ENCODE measurements at regions of chr9 and their contacts with region 1.

Region 1: GRCh38 chr9:34500623-34501267 is 22.0 kb downstream of the ENHO start:
- DNase-seq: no peak
- H3K4me3 ChIP-seq: no peak overlapping the region
- H3K27me3 ChIP-seq: peaks cover 6% of the 10 kb centered on the region
- CTCF ChIP-seq: peak; percentile 99

Region 2: GRCh38 chr9:34163458-34163857 is 337.3 kb before region 1 on chr9:
- CTCF ChIA-PET with region 1: no interaction called
- POLR2A ChIA-PET with region 1: no interaction called
- DNase-seq: no peak
- H3K4me3 ChIP-seq: no peak overlapping the region
- H3K27me3 ChIP-seq: no peaks in the 10 kb centered on the region
- CTCF ChIP-seq: no peak

Region 3: GRCh38 chr9:34430843-34431437 is 69.8 kb before region 1 on chr9:
- CTCF ChIA-PET with region 1: interaction called, 34 read pairs
- POLR2A ChIA-PET with region 1: no interaction called
- DNase-seq: no peak
- H3K4me3 ChIP-seq: no peak overlapping the region
- H3K27me3 ChIP-seq: no peaks in the 10 kb centered on the region
- CTCF ChIP-seq: no peak

Region 4: DNA sequence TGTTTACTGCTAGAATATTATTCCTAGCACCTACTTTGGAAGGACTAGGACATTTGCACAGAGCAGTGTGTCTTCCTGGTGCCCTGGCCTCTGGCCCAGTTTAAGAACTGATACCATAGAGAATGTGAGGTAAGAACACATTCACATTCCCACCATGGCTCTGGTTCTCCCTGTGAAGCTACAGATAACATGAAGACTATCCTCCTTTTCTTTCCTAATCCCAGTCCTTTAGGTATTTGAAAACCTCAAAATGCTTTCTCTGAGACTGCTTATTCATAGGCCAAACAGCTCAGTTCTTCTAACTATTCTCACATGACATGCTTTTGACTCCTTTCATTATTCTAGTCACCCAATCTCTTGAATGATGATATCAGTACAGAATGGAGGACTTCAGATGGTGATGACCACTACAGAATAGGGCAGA is 54.3 kb before region 1 on chr9:
- CTCF ChIA-PET with region 1: interaction called, 37 read pairs
- POLR2A ChIA-PET with region 1: no interaction called
- DNase-seq: no peak
- H3K4me3 ChIP-seq: no peak overlapping the region
- H3K27me3 ChIP-seq: no peaks in the 10 kb centered on the region
- CTCF ChIP-seq: no peak

Region 5: GRCh38 chr9:34513567-34514214 is 12.9 kb after region 1 on chr9:
- CTCF ChIA-PET with region 1: interaction called, 23 read pairs
- POLR2A ChIA-PET with region 1: no interaction called
- DNase-seq: no peak
- H3K4me3 ChIP-seq: no peak overlapping the region
- H3K27me3 ChIP-seq: peaks cover 9% of the 10 kb centered on the region
- CTCF ChIP-seq: no peak

Region 6: DNA sequence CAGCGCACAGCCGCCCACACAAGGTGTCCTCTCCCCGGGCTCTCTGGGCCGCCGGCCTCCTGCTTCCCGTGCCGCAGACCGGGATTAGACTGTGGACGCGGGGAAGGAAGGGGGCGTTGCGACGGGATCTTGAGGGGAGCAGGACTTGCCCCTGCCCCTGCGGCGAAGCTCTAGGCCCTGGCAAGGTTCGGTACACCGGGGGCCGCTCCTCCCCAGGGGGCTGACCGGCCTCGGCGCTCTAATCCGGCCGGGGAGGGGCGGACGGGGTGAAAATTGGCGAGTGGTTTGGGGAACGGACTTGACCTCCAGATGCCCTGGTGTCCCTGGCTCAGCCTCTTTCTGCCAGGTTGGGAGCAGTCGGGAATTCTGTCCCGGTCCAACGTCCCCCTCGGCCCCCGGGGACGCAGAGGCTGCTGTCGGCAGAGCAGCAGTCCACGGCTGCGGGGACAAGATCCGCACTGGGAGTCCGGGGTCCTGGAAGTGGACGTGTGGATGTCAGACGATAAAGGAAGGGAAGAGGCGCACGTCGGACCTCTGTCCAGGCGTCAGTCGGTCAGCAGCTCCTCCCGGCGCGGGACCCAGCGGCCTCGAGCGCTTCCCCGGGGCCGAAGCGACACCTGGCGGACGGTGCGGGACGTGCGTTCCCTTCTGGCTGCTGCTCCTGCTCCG is 90.6 kb after region 1 on chr9:
- CTCF ChIA-PET with region 1: interaction called, 28 read pairs
- POLR2A ChIA-PET with region 1: no interaction called
- DNase-seq: no peak
- H3K4me3 ChIP-seq: no peak overlapping the region
- H3K27me3 ChIP-seq: peaks cover 54% of the 10 kb centered on the region
- CTCF ChIP-seq: peak; percentile 93